ENCODE measurements at regions of chr3 and their contacts with region 1.

Region 1: DNA sequence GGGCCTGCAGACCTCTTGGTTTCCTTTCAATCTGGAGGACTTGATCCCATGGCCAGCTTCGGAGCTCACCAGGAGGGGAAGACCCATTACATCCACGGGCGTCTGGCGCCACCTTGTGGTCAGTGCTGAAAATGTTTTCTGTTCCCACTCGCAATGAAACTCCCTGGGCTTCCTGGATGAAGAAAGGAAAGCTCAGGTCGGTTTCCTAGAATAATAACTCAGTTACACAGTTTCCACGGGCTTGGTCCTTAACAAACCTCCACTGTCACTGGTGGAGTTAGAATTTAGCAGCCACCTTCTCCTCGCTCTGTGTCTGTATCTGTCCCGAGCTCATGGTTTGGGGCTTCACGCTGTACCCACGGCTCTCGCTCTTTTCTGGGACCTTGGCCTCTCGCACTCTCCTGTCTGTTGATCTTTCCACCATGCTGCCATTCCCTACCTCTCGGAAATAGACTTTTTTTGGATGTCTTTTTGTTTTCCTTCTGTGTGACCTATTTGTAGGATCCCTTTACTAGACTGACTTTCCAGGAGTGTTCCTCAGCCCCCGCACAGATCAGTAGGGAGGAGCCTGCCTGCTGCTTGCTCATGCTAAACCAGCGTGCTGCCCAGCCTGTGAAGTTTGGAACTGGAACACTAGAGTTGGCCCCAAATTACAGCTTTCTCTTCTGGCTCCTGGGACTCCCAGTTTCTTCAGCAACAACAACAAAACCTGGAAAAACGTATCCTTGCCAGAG is 56.3 kb downstream of the IL20RB start:
- DNase-seq: peak; percentile 92 to 96
- ATAC-seq: peak; percentile 98
- H3K4me3 ChIP-seq: peak overlapping the region; percentile 60 to 76
- H3K27ac ChIP-seq: peak overlapping the region; percentile 49 to 92
- H3K4me1 ChIP-seq: no peaks in the 10 kb centered on the region
- H3K27me3 ChIP-seq: no peaks in the 10 kb centered on the region

Region 2: DNA sequence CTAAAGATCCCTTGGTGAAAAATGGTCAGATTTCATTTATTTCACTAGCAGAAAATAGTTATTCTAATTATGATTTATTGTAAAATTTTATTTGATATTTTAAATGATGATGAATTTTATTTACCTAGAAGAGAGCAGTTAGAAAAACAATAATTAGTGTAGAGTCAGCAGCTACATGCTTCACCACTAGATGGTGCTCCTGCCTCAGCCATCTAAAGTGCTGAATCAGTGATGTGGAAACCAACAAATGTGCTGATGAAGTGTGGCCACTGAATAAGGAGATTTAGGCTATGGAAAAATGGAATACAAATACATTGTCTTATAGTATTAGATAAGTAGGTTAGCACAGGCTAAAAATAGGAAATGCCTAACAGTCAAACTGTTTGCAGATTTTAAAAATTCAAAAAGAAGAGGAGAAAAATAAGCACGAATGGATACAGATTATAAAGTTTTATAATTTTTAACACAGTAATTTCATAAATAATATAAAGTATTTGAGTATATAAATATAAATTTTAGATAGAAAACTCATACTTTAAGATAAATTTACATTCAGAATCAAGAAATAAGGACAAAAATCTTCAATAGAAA is 938.8 kb before region 1 on chr3:
- intact Hi-C with region 1: loop called (anchors 5 kb)
- DNase-seq: peak; percentile 71 to 79
- ATAC-seq: peak; percentile 87
- H3K4me3 ChIP-seq: no peak overlapping the region
- H3K27ac ChIP-seq: no peak overlapping the region
- H3K4me1 ChIP-seq: peaks cover 0 to 3% of the 10 kb centered on the region in 2 donors
- H3K27me3 ChIP-seq: no peaks in the 10 kb centered on the region

Region 3: DNA sequence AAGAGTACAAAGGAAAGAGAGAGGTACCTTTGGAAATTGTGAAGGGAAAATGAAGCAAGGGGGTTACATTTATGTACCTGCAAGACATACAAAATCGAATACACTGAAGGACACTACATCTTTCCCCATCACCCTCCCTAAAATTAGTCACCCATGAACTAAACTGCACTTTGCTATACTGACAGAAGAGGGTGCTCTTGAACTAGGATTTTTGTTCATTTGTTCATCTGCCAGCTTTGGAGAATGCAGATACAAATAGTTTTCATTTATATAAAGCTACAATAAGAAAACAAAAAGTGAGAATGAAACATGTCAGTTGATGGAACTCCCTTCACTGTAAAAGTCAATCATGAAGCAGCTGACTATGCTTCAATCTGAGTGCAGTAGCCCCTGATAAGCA is 708.2 kb before region 1 on chr3:
- intact Hi-C with region 1: loop called in 1 of 2 experiments (anchors 5 kb)
- DNase-seq: no peak
- ATAC-seq: no peak
- H3K4me3 ChIP-seq: no peak overlapping the region
- H3K27ac ChIP-seq: no peak overlapping the region
- H3K4me1 ChIP-seq: no peaks in the 10 kb centered on the region
- H3K27me3 ChIP-seq: no peaks in the 10 kb centered on the region

Region 4: DNA sequence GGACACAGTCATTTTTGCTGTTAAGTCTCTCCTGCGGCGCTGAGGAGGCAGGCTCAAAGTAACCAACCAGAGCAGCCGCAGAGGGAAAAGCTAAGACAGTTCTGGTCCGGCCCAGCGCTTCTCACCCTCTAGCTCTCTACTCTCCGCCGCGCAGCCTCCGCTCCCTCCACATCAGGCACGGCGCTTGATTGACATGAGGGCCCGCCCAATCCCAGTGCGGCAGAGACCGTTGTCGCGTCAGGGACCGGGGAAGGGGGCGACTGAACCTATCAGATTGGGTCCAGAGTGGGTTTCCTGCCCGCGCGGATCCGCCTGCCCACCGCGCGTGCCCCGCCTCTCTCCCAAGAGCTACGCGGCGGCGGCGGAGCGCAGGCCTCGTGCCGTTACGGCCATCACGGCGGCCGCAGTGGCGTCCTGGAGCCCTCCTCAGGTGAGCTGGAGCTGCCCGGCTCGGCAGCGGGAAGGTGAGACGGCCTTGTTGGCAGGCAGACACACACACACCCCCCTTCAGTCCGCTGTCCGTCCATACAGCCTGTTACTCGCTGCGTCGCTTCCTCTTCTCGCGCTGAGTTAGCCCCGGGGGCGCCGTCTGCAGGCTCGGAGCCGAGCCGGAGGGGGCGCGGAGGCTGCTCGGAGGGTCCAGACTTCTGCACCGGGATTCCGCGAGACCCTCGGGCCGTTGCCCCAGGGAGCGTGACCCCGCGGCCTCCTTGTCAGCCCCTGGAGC is 152.1 kb before region 1 on chr3 and contains the start of gene NCK1:
- intact Hi-C with region 1: loop called in 1 of 2 experiments (anchors 5 kb)
- DNase-seq: peak; percentile 99 to 100
- ATAC-seq: peak; percentile 99
- H3K4me3 ChIP-seq: peak within 1 kb of the TSS; percentile 67 to 69
- H3K27ac ChIP-seq: peak within 1 kb of the TSS in 1 of 2 donors; percentile 37
- H3K4me1 ChIP-seq: no peaks in the 10 kb centered on the region
- H3K27me3 ChIP-seq: no peaks in the 10 kb centered on the region
- total RNA-seq, gene NCK1: 36.7 to 51.9 TPM

Region 5: GRCh38 chr3:136994772-136995516 is 19.2 kb before region 1 on chr3:
- intact Hi-C with region 1: loop called in 1 of 2 experiments (anchors 2 kb)
- DNase-seq: peak; percentile 92 to 93
- ATAC-seq: peak; percentile 93
- H3K4me3 ChIP-seq: no peak overlapping the region
- H3K27ac ChIP-seq: peak overlapping the region; percentile 90 to 95
- H3K4me1 ChIP-seq: peaks cover 0 to 3% of the 10 kb centered on the region in 2 donors
- H3K27me3 ChIP-seq: no peaks in the 10 kb centered on the region

Region 6: GRCh38 chr3:137148917-137149316 is 134.8 kb after region 1 on chr3:
- intact Hi-C with region 1: no loop called
- DNase-seq: no peak
- ATAC-seq: no peak
- H3K4me3 ChIP-seq: no peak overlapping the region
- H3K27ac ChIP-seq: no peak overlapping the region
- H3K4me1 ChIP-seq: no peaks in the 10 kb centered on the region
- H3K27me3 ChIP-seq: no peaks in the 10 kb centered on the region